Dendritic cell treated with granulocyte-macrophage colony-stimulating factor and Interleukin-4, amounts not matched to agents 40 ng/mL and 50 ng/mL, for 4 days (primary cell): ENCODE measurements at regions of chr4 and their contacts with region 1.

Region 1: GRCh38 chr4:168318266-168318895 is at the start of gene DDX60:
- H3K4me3 Mint-ChIP-seq: peak within 1 kb of the TSS; percentile 89
- H3K27ac Mint-ChIP-seq: peak within 1 kb of the TSS; percentile 98
- H3K4me1 Mint-ChIP-seq: peaks cover 6% of the 10 kb centered on the region
- H3K27me3 Mint-ChIP-seq: no peaks in the 10 kb centered on the region

Region 2: DNA sequence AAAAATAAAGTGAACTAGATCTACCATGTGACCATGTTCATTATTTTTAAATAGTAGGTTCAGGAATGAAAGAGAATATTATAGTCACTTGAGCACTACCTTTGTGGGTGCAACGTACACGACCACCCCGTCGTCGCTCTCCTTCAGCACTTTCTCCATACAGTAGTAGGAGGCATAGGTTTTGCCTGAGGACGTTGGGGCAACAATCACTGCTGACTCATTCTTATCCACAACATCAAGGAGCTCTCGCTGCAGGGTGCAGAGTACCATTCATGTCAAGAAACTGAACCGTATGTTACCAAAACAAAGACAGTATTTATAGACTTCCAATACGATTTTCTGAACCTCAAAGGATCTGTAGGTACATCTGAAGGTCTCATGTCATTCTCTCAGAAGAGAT is 44.5 kb before region 1 on chr4:
- intact Hi-C with region 1: no loop called
- H3K4me3 Mint-ChIP-seq: no peak overlapping the region
- H3K27ac Mint-ChIP-seq: no peak overlapping the region
- H3K4me1 Mint-ChIP-seq: no peaks in the 10 kb centered on the region
- H3K27me3 Mint-ChIP-seq: no peaks in the 10 kb centered on the region

Region 3: DNA sequence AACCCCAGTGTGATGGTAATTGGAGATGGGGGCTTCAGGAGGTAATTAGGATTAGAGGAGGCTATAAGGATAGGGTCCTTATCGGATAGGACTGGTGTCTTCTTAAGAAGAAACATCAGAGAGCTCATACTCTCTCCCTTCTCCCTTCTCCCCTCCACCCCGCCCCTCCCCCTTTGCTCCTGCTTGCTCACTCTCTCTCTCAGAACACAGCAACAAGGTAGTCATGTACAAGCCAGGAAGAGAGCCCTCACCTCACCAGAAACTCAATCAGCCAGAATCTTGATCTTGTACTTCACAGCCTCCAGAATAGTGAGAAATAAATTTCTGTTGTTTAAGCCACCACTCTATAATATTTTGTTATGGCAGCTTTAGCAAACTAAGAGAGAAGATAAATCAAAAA is 157.4 kb after region 1 on chr4:
- intact Hi-C with region 1: loop called (anchors 5 kb)
- H3K4me3 Mint-ChIP-seq: no peak overlapping the region
- H3K27ac Mint-ChIP-seq: no peak overlapping the region
- H3K4me1 Mint-ChIP-seq: peaks cover 39% of the 10 kb centered on the region
- H3K27me3 Mint-ChIP-seq: no peaks in the 10 kb centered on the region